H1 (cell line): ENCODE measurements at regions of chr12 and their contacts with region 1.

Region 1: GRCh38 chr12:6470375-6471163 is at the start of gene VAMP1:
- DNase-seq: peak; percentile 91 to 97
- H3K4me3 ChIP-seq: peak within 1 kb of the TSS; percentile 75 to 87 (median 86)
- H3K27ac ChIP-seq: peak within 1 kb of the TSS; percentile 67; the same call in 1 of the 2 replicates
- H3K4me1 ChIP-seq: peaks cover 3 to 7% (median 3%) of the 10 kb centered on the region in 4 experiments; a peak in 3 of 7 replicates
- H3K27me3 ChIP-seq: no peaks in the 10 kb centered on the region; a peak in 1 of 7 replicates
- CTCF ChIP-seq: no peak
- EP300 ChIP-seq: no peak
- POLR2A ChIP-seq: peak; percentile 99
- RAD21 ChIP-seq: no peak
- total RNA-seq, gene VAMP1: 9.3 and 10.8 TPM in 2 replicates

Region 2: GRCh38 chr12:6307529-6307928 is 163.0 kb before region 1 on chr12:
- CTCF ChIA-PET with region 1: interaction called, 11 read pairs
- POLR2A ChIA-PET with region 1: interaction called, 3 read pairs
- DNase-seq: no peak
- H3K4me3 ChIP-seq: no peak overlapping the region
- H3K27ac ChIP-seq: no peak overlapping the region
- H3K4me1 ChIP-seq: peaks cover 0 to 17% (median 13%) of the 10 kb centered on the region in 4 experiments; a peak in 6 of 7 replicates
- H3K27me3 ChIP-seq: peaks cover 0 to 4% (median 2%) of the 10 kb centered on the region in 4 experiments; a peak in 4 of 7 replicates
- CTCF ChIP-seq: no peak
- EP300 ChIP-seq: no peak
- POLR2A ChIP-seq: no peak
- RAD21 ChIP-seq: no peak

Region 3: GRCh38 chr12:6355491-6356371 is 114.8 kb before region 1 on chr12:
- CTCF ChIA-PET with region 1: interaction called, 10 read pairs
- POLR2A ChIA-PET with region 1: interaction called, 9 read pairs
- DNase-seq: peak; percentile 53 to 74
- H3K4me3 ChIP-seq: no peak overlapping the region
- H3K27ac ChIP-seq: no peak overlapping the region
- H3K4me1 ChIP-seq: peaks cover 0 to 9% (median 0%) of the 10 kb centered on the region in 4 experiments; a peak in 4 of 7 replicates
- H3K27me3 ChIP-seq: no peaks in the 10 kb centered on the region
- CTCF ChIP-seq: peak; percentile 50 to 72 (median 69)
- EP300 ChIP-seq: 0 out of 3 replicates have a peak, but pooled peaks of 1 of the 2 experiments have one; percentile 22
- POLR2A ChIP-seq: no peak
- RAD21 ChIP-seq: peak; percentile 43 to 60; a peak in 3 of 4 replicates

Region 4: DNA sequence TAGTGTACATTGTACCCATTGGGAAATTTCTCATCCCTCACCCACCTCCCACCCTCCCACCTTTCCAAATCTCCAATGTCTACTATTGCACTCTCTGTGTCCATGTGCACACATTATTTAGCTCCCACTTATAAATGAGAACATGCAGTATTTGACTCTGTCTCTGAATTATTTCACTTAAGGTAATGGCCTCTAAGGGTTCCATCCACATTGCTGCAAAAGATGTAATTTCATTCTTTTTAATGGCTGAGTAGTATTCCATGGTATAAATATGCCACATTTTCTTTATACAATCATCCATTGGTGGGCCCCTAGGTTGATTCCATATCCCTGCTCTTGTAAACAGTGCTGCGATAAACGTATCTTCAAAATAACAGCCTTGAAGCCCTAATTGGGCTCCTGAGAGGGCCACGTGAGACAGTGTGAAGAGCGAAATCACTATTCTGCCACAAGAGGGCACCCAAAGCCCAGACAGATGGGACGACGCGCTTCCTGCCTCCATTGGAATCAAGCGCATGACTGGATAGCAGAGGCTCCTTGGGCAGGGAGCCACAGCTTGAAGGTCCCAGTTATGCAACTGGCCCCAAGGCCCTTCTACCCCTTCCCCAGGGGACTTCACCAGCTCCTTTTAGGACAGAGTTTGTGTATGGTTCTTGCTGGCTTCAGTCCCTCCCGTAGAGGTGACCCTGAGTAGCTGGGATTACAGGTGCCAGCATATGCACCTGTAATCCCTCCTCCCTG is 47.1 kb before region 1 on chr12:
- CTCF ChIA-PET with region 1: interaction called, 202 read pairs
- POLR2A ChIA-PET with region 1: interaction called, 30 read pairs
- DNase-seq: peak; percentile 70 to 77
- H3K4me3 ChIP-seq: no peak overlapping the region
- H3K27ac ChIP-seq: no peak overlapping the region
- H3K4me1 ChIP-seq: peaks cover 0 to 4% (median under 1%) of the 10 kb centered on the region in 4 experiments; a peak in 2 of 7 replicates
- H3K27me3 ChIP-seq: no peaks in the 10 kb centered on the region; a peak in 1 of 7 replicates
- CTCF ChIP-seq: peak; percentile 84 to 96 (median 95)
- EP300 ChIP-seq: no peak
- POLR2A ChIP-seq: no peak
- RAD21 ChIP-seq: peak; percentile 97 to 99

Region 5: GRCh38 chr12:6443361-6443983 is 27.1 kb before region 1 on chr12:
- CTCF ChIA-PET with region 1: interaction called, 42 read pairs
- POLR2A ChIA-PET with region 1: interaction called, 18 read pairs
- DNase-seq: no peak
- H3K4me3 ChIP-seq: no peak overlapping the region
- H3K27ac ChIP-seq: no peak overlapping the region
- H3K4me1 ChIP-seq: no peaks in the 10 kb centered on the region
- H3K27me3 ChIP-seq: no peaks in the 10 kb centered on the region
- CTCF ChIP-seq: no peak
- EP300 ChIP-seq: no peak
- POLR2A ChIP-seq: no peak
- RAD21 ChIP-seq: no peak

Region 6: GRCh38 chr12:6488240-6488639 is 17.7 kb after region 1 on chr12:
- CTCF ChIA-PET with region 1: interaction called, 13 read pairs
- POLR2A ChIA-PET with region 1: interaction called, 39 read pairs
- DNase-seq: no peak
- H3K4me3 ChIP-seq: no peak overlapping the region
- H3K27ac ChIP-seq: no peak overlapping the region
- H3K4me1 ChIP-seq: peaks cover 0 to 6% (median 1%) of the 10 kb centered on the region in 4 experiments; a peak in 2 of 7 replicates
- H3K27me3 ChIP-seq: no peaks in the 10 kb centered on the region
- CTCF ChIP-seq: no peak
- EP300 ChIP-seq: no peak
- POLR2A ChIP-seq: no peak
- RAD21 ChIP-seq: no peak

Region 7: GRCh38 chr12:6520186-6520585 is 49.6 kb after region 1 on chr12:
- CTCF ChIA-PET with region 1: interaction called, 11 read pairs
- POLR2A ChIA-PET with region 1: no interaction called
- DNase-seq: no peak
- H3K4me3 ChIP-seq: no peak overlapping the region
- H3K27ac ChIP-seq: no peak overlapping the region
- H3K4me1 ChIP-seq: no peaks in the 10 kb centered on the region
- H3K27me3 ChIP-seq: no peaks in the 10 kb centered on the region
- CTCF ChIP-seq: no peak
- EP300 ChIP-seq: no peak
- POLR2A ChIP-seq: no peak
- RAD21 ChIP-seq: no peak